ENCODE measurements at regions of chr5 and their contacts with region 1.

Region 1: DNA sequence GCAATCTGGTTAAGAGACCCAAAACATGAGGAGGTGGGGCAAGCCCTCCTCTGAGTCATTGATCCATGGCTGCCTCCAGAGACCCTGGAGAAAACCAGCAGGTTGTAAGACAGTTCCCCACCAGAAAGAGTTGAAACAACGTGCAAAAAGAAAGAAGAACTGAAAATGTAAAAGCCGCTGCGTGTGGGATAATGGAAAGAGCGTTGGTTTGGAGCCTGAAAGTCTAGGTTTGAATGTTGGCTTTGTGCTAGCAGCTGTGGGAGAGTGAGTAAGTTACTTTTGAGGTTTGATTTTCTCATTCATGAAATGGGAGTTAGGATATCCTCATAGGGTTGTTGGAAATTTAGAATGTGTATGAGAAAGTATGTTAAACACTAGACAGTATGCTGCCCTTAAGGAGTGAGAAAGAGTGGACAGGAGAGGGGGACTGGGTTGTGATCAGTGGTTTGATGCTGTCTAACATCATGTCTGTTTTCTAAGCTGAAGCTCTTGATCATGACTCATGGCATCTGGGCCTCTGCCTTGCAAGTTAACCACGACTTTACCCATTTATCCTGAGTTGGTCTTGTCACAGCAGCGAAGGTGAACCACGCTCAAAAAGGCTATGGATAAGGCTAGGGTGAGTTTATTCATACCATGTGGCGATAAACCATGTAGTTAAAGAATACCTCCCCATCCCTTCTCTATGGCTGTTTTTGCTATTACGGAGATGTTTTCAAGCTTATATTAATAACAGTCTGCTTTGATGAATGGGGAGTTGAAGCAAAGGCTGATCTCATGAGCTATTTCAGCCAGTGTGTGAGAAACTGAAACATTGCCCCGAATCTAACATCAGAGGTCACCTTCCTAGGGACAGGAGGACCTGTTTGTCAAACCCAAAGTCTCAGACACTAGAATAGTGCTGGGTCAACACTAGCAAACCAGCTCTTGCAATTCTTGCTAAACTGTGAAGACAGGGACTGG is 41.3 kb downstream of the ZNF366 start:
- DNase-seq: peak in 2 of 3 donors; percentile 30 to 55
- H3K4me3 ChIP-seq: peak overlapping the region in 1 of 3 experiments; percentile 26
- H3K4me3 Mint-ChIP-seq: peak overlapping the region; percentile 6 to 80
- H3K27ac ChIP-seq: peak overlapping the region; percentile 11 to 35
- H3K27ac Mint-ChIP-seq: peak overlapping the region; percentile 12 to 85 (median 73)
- H3K4me1 ChIP-seq: peaks cover 59 to 64% of the 10 kb centered on the region in 2 donors
- H3K4me1 Mint-ChIP-seq: peaks cover 62% of the 10 kb centered on the region
- H3K27me3 ChIP-seq: no peaks in the 10 kb centered on the region
- H3K27me3 Mint-ChIP-seq: peaks cover 0 to 1% (median 0%) of the 10 kb centered on the region in 3 donors
- CTCF ChIP-seq: no peak

Region 2: DNA sequence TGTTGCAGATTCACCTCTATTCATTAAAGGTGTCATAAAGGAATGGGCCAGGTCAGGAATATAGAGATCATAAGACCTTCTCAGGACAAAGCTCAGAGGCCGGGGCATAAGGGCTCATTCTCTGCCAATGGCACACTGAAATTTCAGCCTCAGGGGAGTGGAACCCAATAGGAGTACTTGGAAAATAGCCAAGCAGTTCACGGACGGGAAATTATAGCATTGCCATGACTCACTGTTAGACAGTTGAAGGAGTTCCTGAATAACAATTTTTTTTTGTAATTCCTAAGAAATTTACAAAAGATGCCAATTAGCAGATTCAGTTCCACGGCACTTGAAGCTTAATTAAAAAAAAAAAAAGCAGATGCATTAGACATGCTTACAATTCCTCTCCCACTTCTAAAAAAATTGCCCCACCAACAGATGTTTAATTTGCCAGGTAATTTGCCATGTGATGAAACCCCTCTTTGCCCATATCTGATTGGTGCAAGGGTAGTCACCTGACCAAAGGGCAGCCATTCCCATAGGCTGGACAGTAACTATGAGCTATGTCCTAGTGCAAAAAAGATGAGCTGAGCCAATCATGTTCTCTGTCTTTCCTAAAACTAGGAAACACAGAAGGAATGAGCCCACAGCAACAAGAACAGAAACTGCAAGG is 87.1 kb before region 1 on chr5:
- intact Hi-C with region 1: loop called in 1 of 2 experiments (anchors 5 kb)
- DNase-seq: peak; percentile 73 to 90 (median 80)
- H3K4me3 ChIP-seq: no peak overlapping the region
- H3K4me3 Mint-ChIP-seq: peak overlapping the region in 1 of 2 donors; percentile 30
- H3K27ac ChIP-seq: peak overlapping the region in 1 of 2 donors; percentile 1
- H3K27ac Mint-ChIP-seq: peak overlapping the region in 4 of 7 donors; percentile 19 to 82 (median 68)
- H3K4me1 ChIP-seq: peaks cover 48 to 50% of the 10 kb centered on the region in 2 donors
- H3K4me1 Mint-ChIP-seq: peaks cover 50% of the 10 kb centered on the region
- H3K27me3 ChIP-seq: no peaks in the 10 kb centered on the region
- H3K27me3 Mint-ChIP-seq: no peaks in the 10 kb centered on the region
- CTCF ChIP-seq: no peak

Region 3: DNA sequence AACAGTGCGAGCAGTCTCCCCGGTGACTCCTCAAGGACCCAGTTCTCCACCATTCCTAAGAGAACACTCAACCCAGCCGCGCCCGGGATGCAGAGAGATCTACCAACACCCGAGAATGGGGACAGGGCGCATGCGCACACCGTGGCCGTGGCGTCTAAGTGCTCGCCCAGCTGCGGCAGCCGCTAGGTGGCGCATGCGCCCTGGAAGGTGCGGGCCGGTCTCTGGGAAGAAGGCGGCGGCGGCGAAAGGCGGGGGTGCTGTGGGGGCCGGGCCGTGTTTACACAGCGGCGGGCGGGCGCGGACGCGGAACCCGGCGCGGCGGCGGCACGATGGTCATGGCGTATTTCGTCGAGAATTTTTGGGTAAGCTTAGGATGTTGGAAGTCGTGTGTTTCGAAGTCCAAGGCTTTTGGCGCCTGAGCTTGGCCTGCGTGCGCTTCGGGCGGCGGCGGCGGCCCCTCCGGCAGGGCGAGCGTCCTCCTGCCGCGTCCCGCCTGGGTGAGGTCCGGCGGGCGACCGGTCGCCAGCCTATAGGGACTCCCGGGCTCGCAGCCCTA is 490.0 kb after region 1 on chr5 and contains the start of gene FCHO2:
- intact Hi-C with region 1: no loop called
- DNase-seq: peak; percentile 93 to 96 (median 94)
- H3K4me3 ChIP-seq: peak within 1 kb of the TSS; percentile 54 to 86 (median 84)
- H3K4me3 Mint-ChIP-seq: peak within 1 kb of the TSS; percentile 96 to 97
- H3K27ac ChIP-seq: peak within 1 kb of the TSS; percentile 79 to 90
- H3K27ac Mint-ChIP-seq: peak within 1 kb of the TSS; percentile 86 to 98 (median 91)
- H3K4me1 ChIP-seq: peaks cover 30 to 47% of the 10 kb centered on the region in 2 donors
- H3K4me1 Mint-ChIP-seq: peaks cover 37% of the 10 kb centered on the region
- H3K27me3 ChIP-seq: peaks cover 0 to 35% of the 10 kb centered on the region in 2 donors
- H3K27me3 Mint-ChIP-seq: peaks cover 10 to 17% (median 13%) of the 10 kb centered on the region in 3 donors
- CTCF ChIP-seq: peak; percentile 76
- polyA plus RNA-seq, gene FCHO2: 8.3 to 10.1 (median 9.9) TPM